ENCODE measurements at regions of chr20 and their contacts with region 1.

Region 1: DNA sequence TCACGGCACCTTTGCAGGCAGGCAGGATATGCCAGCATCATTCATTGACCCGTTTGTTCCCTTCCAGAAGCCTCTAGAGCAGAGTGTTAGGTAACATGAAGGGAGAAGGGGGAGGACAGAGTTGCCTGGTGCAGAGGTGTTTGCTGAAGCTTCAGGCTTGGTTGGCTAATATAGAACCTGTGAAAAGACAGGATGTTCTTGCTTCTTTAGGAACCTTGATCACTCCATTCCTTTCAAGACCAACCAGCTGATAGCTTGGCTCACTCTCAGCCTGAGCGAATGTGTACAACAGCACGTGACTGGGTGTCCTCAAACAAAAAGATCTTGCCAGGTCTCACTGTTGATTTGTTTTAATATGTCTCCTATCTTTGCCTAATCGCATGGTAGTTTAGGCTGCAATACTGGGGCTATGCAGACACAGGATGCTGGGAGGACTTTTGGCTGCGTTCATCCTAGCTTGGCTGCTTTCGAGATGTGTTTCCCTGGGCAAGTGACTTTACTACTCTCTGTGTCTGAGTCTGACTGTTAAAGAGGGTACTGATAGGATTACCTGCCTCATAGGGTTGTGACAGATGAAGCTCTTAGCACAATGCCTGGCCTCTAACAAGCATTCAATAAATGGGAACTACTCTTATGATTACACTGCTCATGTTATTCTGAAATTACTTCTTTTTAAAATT is 16.0 kb downstream of the SHLD1 start:
- DNase-seq: no peak
- ATAC-seq: no peak
- H3K4me3 ChIP-seq: no peak overlapping the region
- H3K4me3 Mint-ChIP-seq: no peak overlapping the region
- H3K27ac ChIP-seq: no peak overlapping the region
- H3K27ac Mint-ChIP-seq: no peak overlapping the region
- H3K4me1 ChIP-seq: peaks cover 0 to 4% of the 10 kb centered on the region in 2 experiments
- H3K4me1 Mint-ChIP-seq: peaks cover 11 to 32% (median 30%) of the 10 kb centered on the region in 3 donors
- H3K27me3 ChIP-seq: no peaks in the 10 kb centered on the region
- H3K27me3 Mint-ChIP-seq: no peaks in the 10 kb centered on the region

Region 2: GRCh38 chr20:5691918-5692618 is 74.2 kb before region 1 on chr20:
- CTCF ChIA-PET with region 1: no interaction called
- POLR2A ChIA-PET with region 1: interaction called in 1 of 2 experiments, 13 read pairs
- DNase-seq: peak in 2 of 35 experiments; percentile 14 to 28
- ATAC-seq: peak in 1 of 4 experiments; percentile 39
- H3K4me3 ChIP-seq: no peak overlapping the region
- H3K4me3 Mint-ChIP-seq: no peak overlapping the region
- H3K27ac ChIP-seq: no peak overlapping the region
- H3K27ac Mint-ChIP-seq: peak overlapping the region in 1 of 2 donors; percentile 6
- H3K4me1 ChIP-seq: peaks cover 0 to 2% of the 10 kb centered on the region in 2 experiments
- H3K4me1 Mint-ChIP-seq: peaks cover 0 to 4% (median 3%) of the 10 kb centered on the region in 3 donors
- H3K27me3 ChIP-seq: peaks cover 0 to 2% of the 10 kb centered on the region in 2 experiments
- H3K27me3 Mint-ChIP-seq: no peaks in the 10 kb centered on the region